ENCODE measurements at regions of chr17 and their contacts with region 1.

Region 1: GRCh38 chr17:49191917-49192741 is 18.2 kb downstream of the GNGT2 start:
- DNase-seq: peak; percentile 95
- H3K4me3 Mint-ChIP-seq: peak overlapping the region; percentile 90
- H3K27ac Mint-ChIP-seq: peak overlapping the region; percentile 98
- H3K4me1 Mint-ChIP-seq: peaks cover 20% of the 10 kb centered on the region
- H3K27me3 Mint-ChIP-seq: no peaks in the 10 kb centered on the region

Region 2: DNA sequence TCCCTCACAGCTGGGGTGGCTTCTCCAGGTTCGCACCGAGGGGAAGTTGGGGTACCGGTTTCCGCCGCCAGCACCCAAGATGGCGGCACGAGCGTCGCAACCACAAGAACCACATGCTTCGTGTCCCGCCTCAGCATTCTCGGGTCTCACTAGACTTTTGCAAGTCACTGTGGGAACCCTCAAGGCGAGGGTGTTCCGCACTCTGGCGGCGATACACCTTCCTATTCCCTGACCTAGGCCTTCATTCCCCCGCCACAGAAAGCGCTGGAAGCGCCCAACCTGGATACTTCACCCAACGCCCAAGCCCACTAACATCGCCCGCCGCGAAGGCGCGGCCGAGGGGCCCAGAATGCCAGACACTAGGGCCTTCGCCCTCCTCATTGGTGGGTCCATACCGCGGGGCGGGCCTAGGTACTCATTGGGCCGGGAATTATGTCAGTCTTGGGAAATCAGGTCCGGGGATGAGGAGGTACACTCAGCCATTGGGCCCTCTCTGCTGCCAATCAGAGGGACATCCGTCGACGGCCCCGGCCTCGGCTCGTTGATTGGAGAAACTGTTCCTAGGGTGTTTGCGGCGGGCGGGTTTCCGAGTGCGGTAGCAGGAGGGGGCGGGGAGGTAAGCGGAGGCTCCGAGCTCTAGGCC is 1144.3 kb before region 1 on chr17 and contains the start of gene NFE2L1:
- CTCF ChIA-PET with region 1: no interaction called
- intact Hi-C with region 1: loop called (anchors 5 kb)
- DNase-seq: peak; percentile 100
- H3K4me3 Mint-ChIP-seq: peak within 1 kb of the TSS; percentile 99
- H3K27ac Mint-ChIP-seq: peak within 1 kb of the TSS; percentile 98
- H3K4me1 Mint-ChIP-seq: peaks cover 51% of the 10 kb centered on the region
- H3K27me3 Mint-ChIP-seq: no peaks in the 10 kb centered on the region
- total RNA-seq, gene NFE2L1: 95.2 to 102 TPM

Region 3: GRCh38 chr17:48841395-48841831 is 350.7 kb before region 1 on chr17:
- CTCF ChIA-PET with region 1: no interaction called
- intact Hi-C with region 1: loop called (anchors 1 kb)
- DNase-seq: peak; percentile 66
- H3K4me3 Mint-ChIP-seq: no peak overlapping the region
- H3K27ac Mint-ChIP-seq: peak overlapping the region; percentile 18
- H3K4me1 Mint-ChIP-seq: peaks cover 59% of the 10 kb centered on the region
- H3K27me3 Mint-ChIP-seq: no peaks in the 10 kb centered on the region

Region 4: DNA sequence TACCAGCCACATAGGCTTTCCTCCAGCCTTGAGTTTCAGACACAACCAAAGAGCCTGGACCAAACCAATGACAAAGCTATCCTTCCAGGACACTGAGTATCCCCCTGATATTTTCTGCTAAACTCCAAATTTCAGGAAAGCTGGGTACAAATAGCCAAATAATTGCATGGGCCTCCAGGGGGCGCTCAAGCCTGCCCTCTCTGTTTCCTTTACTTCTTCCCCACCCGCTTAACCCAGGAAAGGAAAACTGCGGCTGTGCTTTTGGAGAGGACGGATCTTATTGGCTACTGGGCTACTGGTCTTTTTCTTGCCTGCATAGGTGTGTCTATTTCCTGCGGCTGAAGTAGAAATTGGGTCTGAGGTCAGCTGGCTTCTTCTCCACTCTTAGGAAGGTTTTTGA is 11.8 kb before region 1 on chr17:
- CTCF ChIA-PET with region 1: interaction called, 11 read pairs
- intact Hi-C with region 1: no loop called
- DNase-seq: peak; percentile 77
- H3K4me3 Mint-ChIP-seq: no peak overlapping the region
- H3K27ac Mint-ChIP-seq: no peak overlapping the region
- H3K4me1 Mint-ChIP-seq: no peaks in the 10 kb centered on the region
- H3K27me3 Mint-ChIP-seq: peaks cover under 1% of the 10 kb centered on the region

Region 5: GRCh38 chr17:49223517-49224197 is 31.5 kb after region 1 on chr17:
- CTCF ChIA-PET with region 1: interaction called, 28 read pairs
- intact Hi-C with region 1: loop called (anchors 2 kb)
- DNase-seq: peak; percentile 81
- H3K4me3 Mint-ChIP-seq: peak overlapping the region; percentile 63
- H3K27ac Mint-ChIP-seq: peak overlapping the region; percentile 19
- H3K4me1 Mint-ChIP-seq: peaks cover 28% of the 10 kb centered on the region
- H3K27me3 Mint-ChIP-seq: peaks cover 10% of the 10 kb centered on the region

Region 6: DNA sequence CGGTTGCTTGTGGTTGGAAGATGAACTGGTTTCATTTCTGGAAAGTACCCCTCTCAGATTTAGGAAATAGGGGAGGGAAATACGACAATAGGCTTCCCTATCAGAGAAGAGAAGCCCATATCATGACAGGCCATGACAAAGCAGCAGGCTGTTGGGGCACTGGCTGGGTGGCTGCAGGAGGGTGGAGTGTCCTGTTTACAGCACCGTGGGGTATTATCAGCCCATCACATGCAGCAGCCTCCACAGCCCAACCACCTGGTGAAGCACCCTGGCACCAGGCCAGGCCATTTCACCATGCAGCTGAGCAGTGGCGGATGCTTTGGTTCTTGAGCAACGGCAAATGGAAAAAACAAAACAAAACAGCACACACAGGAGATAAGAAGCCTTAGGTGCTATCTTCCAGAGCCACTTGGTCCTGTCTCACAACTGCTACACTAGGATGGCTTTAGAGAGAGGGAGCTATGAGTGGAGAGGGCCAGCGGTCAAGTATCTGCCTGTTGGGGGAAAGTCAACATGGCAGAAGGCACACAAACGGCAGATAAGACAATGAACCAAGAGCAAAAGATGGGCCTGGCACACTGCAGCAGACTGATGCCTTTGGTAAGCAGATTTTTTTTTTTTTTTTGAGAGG is 547.6 kb after region 1 on chr17:
- CTCF ChIA-PET with region 1: no interaction called
- intact Hi-C with region 1: loop called (anchors 5 kb)
- DNase-seq: peak; percentile 92
- H3K4me3 Mint-ChIP-seq: peak overlapping the region; percentile 84
- H3K27ac Mint-ChIP-seq: peak overlapping the region; percentile 99
- H3K4me1 Mint-ChIP-seq: peaks cover 73% of the 10 kb centered on the region
- H3K27me3 Mint-ChIP-seq: no peaks in the 10 kb centered on the region